ENCODE measurements at regions of chr20 and their contacts with region 1.

Region 1: GRCh38 chr20:45373353-45374100 is 4.6 kb downstream of the TP53TG5 start:
- DNase-seq: peak; percentile 86 to 90 (median 87)
- H3K4me3 ChIP-seq: peak overlapping the region; percentile 60 to 71
- H3K4me3 Mint-ChIP-seq: peak overlapping the region; percentile 87 to 95 (median 90)
- H3K27ac ChIP-seq: peak overlapping the region; percentile 63
- H3K27ac Mint-ChIP-seq: peak overlapping the region; percentile 91 to 98 (median 95)
- H3K4me1 ChIP-seq: peaks cover 22% of the 10 kb centered on the region
- H3K4me1 Mint-ChIP-seq: peaks cover 14 to 44% (median 32%) of the 10 kb centered on the region in 4 donors
- H3K27me3 ChIP-seq: no peaks in the 10 kb centered on the region
- H3K27me3 Mint-ChIP-seq: no peaks in the 10 kb centered on the region

Region 2: DNA sequence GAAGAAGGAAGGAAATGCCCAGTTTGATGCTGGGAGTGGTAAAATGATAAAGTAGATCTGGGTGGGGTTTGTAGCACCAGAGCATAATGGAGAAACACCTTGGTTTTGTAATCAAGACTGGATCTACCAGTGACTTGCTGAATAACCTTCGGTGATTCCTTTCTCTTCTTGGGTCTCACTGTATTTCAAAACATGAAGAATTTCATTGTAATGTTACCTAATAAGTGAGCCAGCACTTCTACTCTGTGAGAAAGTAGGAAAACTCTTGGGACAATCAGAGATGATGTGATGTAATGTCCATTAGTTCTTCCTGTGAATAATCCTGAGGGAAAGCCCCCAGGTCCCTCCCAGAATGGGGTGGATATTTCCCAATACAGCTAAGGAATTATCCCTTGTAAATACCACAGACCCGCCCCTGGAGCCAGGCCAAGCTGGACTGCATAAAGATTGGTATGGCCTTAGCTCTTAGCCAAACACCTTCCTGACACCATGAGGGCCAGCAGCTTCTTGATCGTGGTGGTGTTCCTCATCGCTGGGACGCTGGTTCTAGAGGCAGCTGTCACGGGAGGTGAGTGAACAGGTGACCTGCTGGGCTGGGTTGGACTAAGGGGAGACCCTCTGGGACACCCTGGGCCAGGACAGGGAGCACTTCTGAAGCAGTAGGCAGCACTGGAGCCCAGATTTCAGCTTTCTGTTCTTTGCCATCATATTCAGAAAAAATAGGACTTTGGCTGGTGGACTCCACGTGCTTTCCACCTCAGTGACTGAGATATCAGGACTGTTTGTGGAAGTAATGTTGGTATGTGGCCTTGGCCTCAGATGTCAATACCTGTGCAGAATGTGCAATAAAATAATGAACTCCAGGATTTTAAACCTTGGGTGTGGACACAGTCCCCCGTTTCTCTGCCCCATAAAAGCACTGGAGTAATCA is 198.8 kb before region 1 on chr20 and contains the start of gene PI3:
- CTCF ChIA-PET with region 1: no interaction called
- POLR2A ChIA-PET with region 1: no interaction called
- intact Hi-C with region 1: no loop called
- DNase-seq: no peak
- H3K4me3 ChIP-seq: no peak within 1 kb of the TSS
- H3K4me3 Mint-ChIP-seq: no peak within 1 kb of the TSS
- H3K27ac ChIP-seq: no peak within 1 kb of the TSS
- H3K27ac Mint-ChIP-seq: no peak within 1 kb of the TSS
- H3K4me1 ChIP-seq: no peaks in the 10 kb centered on the region
- H3K4me1 Mint-ChIP-seq: no peaks in the 10 kb centered on the region
- H3K27me3 ChIP-seq: no peaks in the 10 kb centered on the region
- H3K27me3 Mint-ChIP-seq: peaks cover 9 to 29% of the 10 kb centered on the region in 2 donors
- total RNA-seq, gene PI3: not detected

Region 3: DNA sequence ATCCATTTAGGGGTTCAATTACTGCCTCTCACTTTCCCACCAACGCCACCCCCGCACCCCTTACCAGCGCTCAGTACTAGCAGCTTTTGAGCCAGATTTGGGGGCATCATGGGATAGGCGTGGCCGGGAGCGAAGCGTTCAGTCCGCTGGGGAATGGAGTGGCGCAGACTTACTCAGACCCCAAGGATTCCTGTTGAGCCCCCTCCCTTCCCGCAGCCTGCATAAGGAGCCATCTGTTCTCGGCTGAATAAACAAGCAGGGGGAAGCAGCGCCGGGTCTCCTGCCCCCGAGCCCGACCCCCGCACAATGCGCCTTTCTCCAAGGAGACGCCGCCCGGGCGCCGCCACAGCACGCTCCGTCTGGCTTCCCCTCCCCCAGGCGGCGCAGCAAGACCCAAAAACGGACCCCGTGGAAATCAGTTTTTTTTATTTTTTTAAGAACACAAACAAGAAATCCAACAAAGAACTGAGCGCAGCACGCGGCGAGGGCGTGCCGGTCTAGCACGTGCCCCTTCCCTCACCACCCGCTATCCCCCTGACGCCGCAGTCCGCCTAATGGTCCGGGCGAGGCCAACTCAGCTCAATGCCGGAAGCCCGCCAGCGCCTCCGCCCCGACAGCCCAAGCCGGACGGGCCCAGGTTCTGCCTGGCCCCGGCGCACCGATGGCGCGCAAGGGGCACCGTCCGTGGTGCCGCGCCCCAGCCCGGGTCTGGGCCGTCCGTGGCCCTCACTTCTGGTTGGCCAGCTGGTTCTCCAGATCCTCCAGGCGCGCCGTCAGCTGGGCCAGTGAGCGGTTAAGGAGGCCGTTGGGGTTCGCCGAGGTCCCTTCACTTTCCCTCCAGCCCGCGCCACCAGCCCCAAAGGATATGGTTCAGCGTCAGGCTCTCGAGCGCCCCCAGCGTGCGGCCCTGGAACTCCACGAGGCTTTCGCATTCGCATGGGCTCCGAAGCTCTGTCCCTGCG is 80.2 kb before region 1 on chr20:
- CTCF ChIA-PET with region 1: interaction called, 10 read pairs
- POLR2A ChIA-PET with region 1: no interaction called
- intact Hi-C with region 1: no loop called
- DNase-seq: peak; percentile 70 to 77 (median 71)
- H3K4me3 ChIP-seq: peak overlapping the region; percentile 40 to 64
- H3K4me3 Mint-ChIP-seq: peak overlapping the region; percentile 68 to 84 (median 79)
- H3K27ac ChIP-seq: no peak overlapping the region
- H3K27ac Mint-ChIP-seq: no peak overlapping the region
- H3K4me1 ChIP-seq: peaks cover 11% of the 10 kb centered on the region
- H3K4me1 Mint-ChIP-seq: peaks cover 2 to 8% (median 4%) of the 10 kb centered on the region in 4 donors
- H3K27me3 ChIP-seq: no peaks in the 10 kb centered on the region
- H3K27me3 Mint-ChIP-seq: peaks cover 9 to 30% of the 10 kb centered on the region in 2 donors

Region 4: GRCh38 chr20:45362804-45363610 is 10.5 kb before region 1 on chr20 and contains the start of gene SYS1:
- CTCF ChIA-PET with region 1: interaction called, 184 read pairs
- POLR2A ChIA-PET with region 1: interaction called, 179 read pairs
- intact Hi-C with region 1: loop called (anchors 1 kb)
- DNase-seq: peak; percentile 98 to 99 (median 99)
- H3K4me3 ChIP-seq: peak within 1 kb of the TSS; percentile 67 to 83
- H3K4me3 Mint-ChIP-seq: peak within 1 kb of the TSS; percentile 95 to 99 (median 98)
- H3K27ac ChIP-seq: peak within 1 kb of the TSS; percentile 97
- H3K27ac Mint-ChIP-seq: peak within 1 kb of the TSS; percentile 98 to 100 (median 100)
- H3K4me1 ChIP-seq: peaks cover 41% of the 10 kb centered on the region
- H3K4me1 Mint-ChIP-seq: peaks cover 28 to 59% (median 52%) of the 10 kb centered on the region in 4 donors
- H3K27me3 ChIP-seq: no peaks in the 10 kb centered on the region
- H3K27me3 Mint-ChIP-seq: no peaks in the 10 kb centered on the region
- total RNA-seq, gene SYS1: 56.4 to 56.6 TPM

Region 5: GRCh38 chr20:45392733-45393132 is 19.2 kb after region 1 on chr20:
- CTCF ChIA-PET with region 1: interaction called, 18 read pairs
- POLR2A ChIA-PET with region 1: interaction called, 13 read pairs
- intact Hi-C with region 1: no loop called
- DNase-seq: no peak
- H3K4me3 ChIP-seq: no peak overlapping the region
- H3K4me3 Mint-ChIP-seq: no peak overlapping the region
- H3K27ac ChIP-seq: no peak overlapping the region
- H3K27ac Mint-ChIP-seq: no peak overlapping the region
- H3K4me1 ChIP-seq: no peaks in the 10 kb centered on the region
- H3K4me1 Mint-ChIP-seq: peaks cover 0 to 4% (median 2%) of the 10 kb centered on the region in 4 donors
- H3K27me3 ChIP-seq: no peaks in the 10 kb centered on the region
- H3K27me3 Mint-ChIP-seq: no peaks in the 10 kb centered on the region

Region 6: DNA sequence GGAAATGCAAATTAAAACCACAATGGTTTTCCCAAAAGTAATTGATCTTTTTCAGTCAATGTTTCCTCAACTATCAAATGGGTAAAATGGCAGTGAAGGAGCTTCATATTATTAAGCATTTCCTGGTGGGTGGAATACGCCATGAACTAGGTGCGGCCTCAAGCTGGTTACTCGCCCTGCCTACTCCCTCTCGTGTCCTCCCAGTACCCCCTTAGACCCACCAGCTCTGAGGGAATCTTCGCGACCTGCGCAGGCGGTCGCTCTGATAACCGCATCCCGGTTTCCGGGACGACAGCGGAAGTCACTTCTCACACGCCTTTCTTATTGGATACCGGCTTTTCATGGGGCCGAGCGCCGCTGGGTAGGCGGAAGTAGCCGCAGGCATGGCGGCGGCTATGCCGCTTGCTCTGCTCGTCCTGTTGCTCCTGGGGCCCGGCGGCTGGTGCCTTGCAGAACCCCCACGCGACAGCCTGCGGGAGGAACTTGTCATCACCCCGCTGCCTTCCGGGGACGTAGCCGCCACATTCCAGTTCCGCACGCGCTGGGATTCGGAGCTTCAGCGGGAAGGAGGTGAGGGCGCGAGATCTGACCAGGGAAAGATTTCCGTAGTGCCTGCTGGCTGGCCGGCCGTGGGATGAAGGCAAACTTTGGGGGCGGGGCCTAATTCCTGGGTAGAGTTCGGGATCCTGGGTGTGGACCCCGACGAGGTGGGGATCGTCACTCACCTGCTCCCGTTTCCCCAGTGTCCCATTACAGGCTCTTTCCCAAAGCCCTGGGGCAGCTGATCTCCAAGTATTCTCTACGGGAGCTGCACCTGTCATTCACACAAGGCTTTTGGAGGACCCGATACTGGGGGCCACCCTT is 42.5 kb after region 1 on chr20 and contains the start of gene PIGT:
- CTCF ChIA-PET with region 1: interaction called, 33 read pairs
- POLR2A ChIA-PET with region 1: interaction called, 121 read pairs
- intact Hi-C with region 1: loop called (anchors 1 kb)
- DNase-seq: peak; percentile 91 to 96 (median 93)
- H3K4me3 ChIP-seq: peak within 1 kb of the TSS; percentile 51 to 87
- H3K4me3 Mint-ChIP-seq: peak within 1 kb of the TSS; percentile 95 to 99 (median 96)
- H3K27ac ChIP-seq: peak within 1 kb of the TSS; percentile 91
- H3K27ac Mint-ChIP-seq: peak within 1 kb of the TSS; percentile 96 to 99 (median 98)
- H3K4me1 ChIP-seq: peaks cover 27% of the 10 kb centered on the region
- H3K4me1 Mint-ChIP-seq: peaks cover 23 to 51% (median 35%) of the 10 kb centered on the region in 4 donors
- H3K27me3 ChIP-seq: no peaks in the 10 kb centered on the region
- H3K27me3 Mint-ChIP-seq: no peaks in the 10 kb centered on the region
- total RNA-seq, gene PIGT: 81.9 to 84.5 TPM

Region 7: GRCh38 chr20:45450097-45450818 is 76.7 kb after region 1 on chr20:
- CTCF ChIA-PET with region 1: interaction called, 14 read pairs
- POLR2A ChIA-PET with region 1: interaction called, 3 read pairs
- intact Hi-C with region 1: no loop called
- DNase-seq: peak in 4 of 5 donors; percentile 36 to 47 (median 46)
- H3K4me3 ChIP-seq: no peak overlapping the region
- H3K4me3 Mint-ChIP-seq: no peak overlapping the region
- H3K27ac ChIP-seq: no peak overlapping the region
- H3K27ac Mint-ChIP-seq: no peak overlapping the region
- H3K4me1 ChIP-seq: no peaks in the 10 kb centered on the region
- H3K4me1 Mint-ChIP-seq: peaks cover 6 to 11% (median 8%) of the 10 kb centered on the region in 4 donors
- H3K27me3 ChIP-seq: no peaks in the 10 kb centered on the region
- H3K27me3 Mint-ChIP-seq: peaks cover 4 to 8% of the 10 kb centered on the region in 2 donors